GM12878 (cell line): ENCODE measurements at regions of chr1 and their contacts with region 1.

Region 1: DNA sequence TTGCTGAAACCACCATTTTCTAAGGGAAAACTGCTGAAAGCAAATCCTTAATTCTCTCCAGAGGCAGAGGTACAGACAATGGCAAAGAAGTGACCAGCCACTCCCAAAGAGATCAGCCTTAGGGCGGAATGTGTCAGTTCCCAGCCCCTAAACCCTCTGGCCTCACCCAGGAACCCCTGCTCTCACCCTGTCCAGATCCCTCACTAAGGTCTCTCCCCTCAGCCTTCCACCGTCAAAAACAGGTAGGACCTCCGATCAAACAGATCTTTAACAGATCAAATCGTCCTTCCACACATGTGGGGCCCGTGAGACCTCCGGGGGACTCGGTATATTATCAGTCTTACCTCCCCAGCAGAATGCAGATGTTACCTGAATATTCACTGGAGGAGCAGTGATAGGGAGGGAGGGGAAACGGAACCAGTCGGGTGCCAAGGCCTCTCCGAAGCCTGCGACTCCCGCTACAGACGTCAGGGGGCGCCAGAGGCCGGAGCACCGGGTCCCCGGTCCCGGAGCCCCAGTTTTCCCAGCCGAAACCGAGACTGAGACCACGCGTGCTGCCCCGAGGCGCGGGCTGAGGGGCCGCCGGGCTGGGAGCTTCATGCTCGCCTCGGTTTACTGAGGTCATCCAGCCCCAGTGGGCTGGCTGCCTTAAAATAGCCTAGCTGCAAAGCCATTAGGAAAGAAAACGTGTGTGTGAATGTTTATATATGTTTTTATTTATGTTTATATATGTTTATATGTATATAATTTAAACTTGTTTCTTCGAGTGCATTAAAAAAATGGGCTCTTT is 23.6 kb downstream of the GPA33 start:
- DNase-seq: no peak
- ATAC-seq: peak; percentile 97
- H3K4me3 ChIP-seq: peak overlapping the region; percentile 70; the same call in 1 of the 2 replicates
- H3K27ac ChIP-seq: no peak overlapping the region
- H3K4me1 ChIP-seq: no peaks in the 10 kb centered on the region
- H3K27me3 ChIP-seq: no peaks in the 10 kb centered on the region; a peak in 1 of 4 replicates
- CTCF ChIP-seq: peak; percentile 92 to 98 (median 97); a peak in 5 of 6 replicates
- EP300 ChIP-seq: no peak
- POLR2A ChIP-seq: no peak
- RAD21 ChIP-seq: peak; percentile 87

Region 2: GRCh38 chr1:167121375-167122120 is 55.0 kb after region 1 on chr1:
- CTCF ChIA-PET with region 1: interaction called, 7 read pairs
- POLR2A ChIA-PET with region 1: no interaction called
- RAD21 ChIA-PET with region 1: interaction called, 4 read pairs
- SMC1A ChIA-PET with region 1: interaction called, 7 read pairs
- in situ Hi-C with region 1: loop called (anchors 5 kb)
- intact Hi-C with region 1: loop called (anchors 1 kb)
- DNase-seq: no peak
- ATAC-seq: peak; percentile 44
- H3K4me3 ChIP-seq: no peak overlapping the region
- H3K27ac ChIP-seq: no peak overlapping the region
- H3K4me1 ChIP-seq: no peaks in the 10 kb centered on the region
- H3K27me3 ChIP-seq: peaks cover 0 to 2% of the 10 kb centered on the region in 2 experiments; a peak in 1 of 4 replicates
- CTCF ChIP-seq: no peak
- EP300 ChIP-seq: no peak
- POLR2A ChIP-seq: no peak
- RAD21 ChIP-seq: no peak